ENCODE measurements at regions of chr11 and their contacts with region 1.

Region 1: DNA sequence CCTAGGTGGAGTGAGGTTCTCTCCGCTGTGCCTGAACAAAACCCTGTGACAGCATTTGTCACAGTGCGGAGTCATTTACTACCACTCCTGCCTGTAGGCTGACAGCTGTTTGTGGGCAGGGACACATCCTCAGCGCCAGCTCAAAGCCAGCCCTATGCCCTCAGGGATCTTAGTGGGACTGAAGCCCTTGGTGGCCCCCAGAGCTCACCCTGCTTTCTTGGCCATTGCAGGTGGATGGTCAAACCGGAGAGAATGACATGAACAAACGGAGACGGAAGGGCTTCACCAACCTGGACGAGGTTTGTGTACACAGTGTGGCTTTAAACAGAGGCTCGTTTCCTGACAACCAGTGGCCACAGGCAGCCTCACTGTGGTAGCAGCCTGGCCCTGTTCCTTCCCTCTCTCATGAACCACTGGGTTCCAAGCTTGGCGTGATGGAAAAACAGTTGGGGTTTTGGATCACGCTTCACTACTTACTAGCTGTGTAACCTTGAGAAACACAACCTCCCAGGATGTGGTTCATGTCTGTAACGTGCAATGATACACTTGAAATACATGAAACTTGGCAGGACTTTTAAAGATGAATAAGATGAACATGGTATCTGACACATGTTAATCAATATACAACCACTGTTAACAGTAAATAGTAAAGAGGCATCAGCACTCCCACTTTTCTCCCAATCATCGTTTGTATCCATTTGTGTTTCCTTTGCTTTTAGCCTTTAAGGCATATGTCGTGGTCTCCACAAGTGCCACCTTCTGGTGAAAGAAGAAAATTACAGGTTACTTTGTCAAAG is 125.8 kb downstream of the MICAL2 start:
- DNase-seq: no peak
- H3K4me3 ChIP-seq: no peak overlapping the region
- CTCF ChIP-seq: peak; percentile 46

Region 2: GRCh38 chr11:12043959-12044819 is 192.0 kb before region 1 on chr11:
- CTCF ChIA-PET with region 1: interaction called, 95 read pairs
- POLR2A ChIA-PET with region 1: interaction called, 4 read pairs
- DNase-seq: peak; percentile 94
- H3K4me3 ChIP-seq: peak overlapping the region; percentile 34
- CTCF ChIP-seq: peak; percentile 82

Region 3: GRCh38 chr11:12102588-12103410 is 133.3 kb before region 1 on chr11:
- CTCF ChIA-PET with region 1: interaction called, 10 read pairs
- POLR2A ChIA-PET with region 1: no interaction called
- DNase-seq: no peak
- H3K4me3 ChIP-seq: no peak overlapping the region
- CTCF ChIP-seq: no peak

Region 4: GRCh38 chr11:12137938-12138731 is 98.0 kb before region 1 on chr11:
- CTCF ChIA-PET with region 1: interaction called, 12 read pairs
- POLR2A ChIA-PET with region 1: interaction called, 8 read pairs
- DNase-seq: peak; percentile 97
- H3K4me3 ChIP-seq: no peak overlapping the region
- CTCF ChIP-seq: no peak

Region 5: DNA sequence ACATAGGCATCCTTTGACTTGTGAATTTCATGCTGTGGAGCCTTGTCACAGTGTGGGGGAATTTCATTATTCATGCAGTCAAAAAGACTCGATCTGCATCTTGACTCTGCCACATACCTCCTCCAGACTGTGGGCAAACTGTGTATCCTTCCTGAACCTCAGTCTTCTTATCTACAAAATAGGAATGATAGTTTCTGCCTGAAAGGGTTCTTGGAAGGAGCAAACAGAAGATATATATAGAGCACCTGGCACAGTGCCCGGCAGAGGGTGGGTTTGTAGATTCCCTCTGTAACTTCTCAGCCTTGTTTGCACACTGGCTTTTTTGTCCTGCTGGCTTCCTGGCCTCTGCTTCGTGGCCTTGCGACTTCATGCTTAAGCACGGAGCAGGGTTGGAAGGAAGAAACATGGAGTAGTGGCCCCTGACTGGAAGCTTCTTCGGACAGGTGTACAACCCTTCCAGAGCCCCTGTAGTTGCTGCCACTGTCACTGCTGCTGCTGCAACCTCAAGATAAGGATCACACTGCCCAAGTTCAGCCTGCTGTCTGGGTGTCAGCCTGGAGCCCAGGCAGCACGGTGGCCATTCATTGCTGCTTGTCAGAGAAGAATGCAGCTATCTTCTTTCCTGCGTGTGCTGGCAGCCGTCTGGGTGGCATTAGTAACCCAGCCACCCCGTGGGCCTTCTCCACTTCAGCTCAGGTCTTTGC is 19.3 kb before region 1 on chr11:
- CTCF ChIA-PET with region 1: interaction called, 28 read pairs
- POLR2A ChIA-PET with region 1: no interaction called
- DNase-seq: no peak
- H3K4me3 ChIP-seq: no peak overlapping the region
- CTCF ChIP-seq: no peak

Region 6: GRCh38 chr11:12248338-12248737 is 12.2 kb after region 1 on chr11:
- CTCF ChIA-PET with region 1: interaction called, 30 read pairs
- POLR2A ChIA-PET with region 1: no interaction called
- DNase-seq: no peak
- H3K4me3 ChIP-seq: no peak overlapping the region
- CTCF ChIP-seq: no peak

Region 7: GRCh38 chr11:12556788-12557384 is 320.7 kb after region 1 on chr11:
- CTCF ChIA-PET with region 1: no interaction called
- POLR2A ChIA-PET with region 1: no interaction called
- DNase-seq: peak; percentile 90
- H3K4me3 ChIP-seq: no peak overlapping the region
- CTCF ChIP-seq: no peak

Measured in AG04449 (cell line).